Psoas muscle (tissue), 8 donors: ENCODE measurements at regions of chr3 and their contacts with region 1.

Region 1: GRCh38 chr3:132519914-132520313 is 77.2 kb upstream of the ACKR4 start:
- DNase-seq: no peak
- ATAC-seq: no peak
- H3K4me3 ChIP-seq: no peak overlapping the region
- H3K27ac ChIP-seq: no peak overlapping the region
- H3K4me1 ChIP-seq: no peaks in the 10 kb centered on the region
- H3K27me3 ChIP-seq: no peaks in the 10 kb centered on the region
- CTCF ChIP-seq: no peak

Region 2: DNA sequence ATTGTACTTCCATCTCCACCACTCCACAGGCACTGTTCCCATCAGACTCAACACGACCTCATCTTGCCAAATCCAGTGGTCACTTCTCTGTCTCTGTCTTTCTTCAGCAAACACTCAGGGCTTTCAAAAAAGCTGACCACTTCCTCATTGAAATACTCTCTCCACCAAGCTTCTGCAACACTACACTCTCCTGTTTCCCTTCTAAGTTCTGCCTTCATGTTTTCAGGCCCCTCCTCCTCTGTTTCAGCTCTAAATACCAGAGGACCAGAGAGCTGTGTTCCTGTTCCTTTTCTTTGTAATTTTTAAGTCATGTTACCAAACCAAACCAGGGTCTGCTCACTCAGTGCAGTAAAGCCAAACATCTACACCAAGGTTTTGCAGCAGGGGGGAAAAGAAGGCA is 236.5 kb before region 1 on chr3:
- intact Hi-C with region 1: no loop called
- DNase-seq: no peak
- ATAC-seq: peak in 1 of 4 donors; percentile 26
- H3K4me3 ChIP-seq: no peak overlapping the region
- H3K27ac ChIP-seq: no peak overlapping the region
- H3K4me1 ChIP-seq: no peaks in the 10 kb centered on the region
- H3K27me3 ChIP-seq: no peaks in the 10 kb centered on the region
- CTCF ChIP-seq: no peak

Region 3: DNA sequence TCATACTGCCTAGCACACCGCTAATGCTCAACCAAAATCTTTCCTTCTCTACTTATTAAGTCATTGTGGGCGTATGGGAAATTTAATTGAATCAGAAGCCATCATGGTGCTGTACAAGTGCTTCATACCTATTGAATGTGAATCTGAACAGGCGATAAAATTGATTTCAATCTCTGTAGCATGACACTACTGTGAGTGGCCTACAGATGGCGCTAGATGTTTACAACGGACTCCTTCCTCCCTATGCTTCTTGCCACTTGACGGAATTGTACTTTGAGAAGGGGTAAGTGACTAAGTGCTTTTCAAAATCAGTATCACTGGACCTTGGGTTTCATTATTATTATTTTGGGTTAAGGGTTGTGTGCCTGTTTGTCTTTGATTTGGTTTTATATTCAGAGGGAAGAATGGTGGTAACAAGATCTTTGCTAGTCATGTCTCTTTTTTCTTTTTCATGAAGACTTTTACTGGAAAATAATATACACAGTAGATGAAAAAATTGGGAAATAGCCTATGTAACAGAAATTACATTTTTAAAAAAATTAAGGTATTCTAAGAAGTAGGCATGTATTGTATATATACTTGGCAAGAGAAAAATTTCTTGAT is 167.3 kb before region 1 on chr3:
- intact Hi-C with region 1: loop called in 1 of 2 experiments (anchors 5 kb)
- DNase-seq: peak in 1 of 2 donors; percentile 21
- ATAC-seq: peak; percentile 81 to 94 (median 85)
- H3K4me3 ChIP-seq: no peak overlapping the region
- H3K27ac ChIP-seq: no peak overlapping the region
- H3K4me1 ChIP-seq: no peaks in the 10 kb centered on the region
- H3K27me3 ChIP-seq: no peaks in the 10 kb centered on the region
- CTCF ChIP-seq: peak; percentile 89

Region 4: GRCh38 chr3:132682201-132682600 is 162.3 kb after region 1 on chr3:
- intact Hi-C with region 1: loop called in 1 of 2 experiments (anchors 5 kb)
- DNase-seq: no peak
- ATAC-seq: no peak
- H3K4me3 ChIP-seq: no peak overlapping the region
- H3K27ac ChIP-seq: no peak overlapping the region
- H3K4me1 ChIP-seq: no peaks in the 10 kb centered on the region
- H3K27me3 ChIP-seq: no peaks in the 10 kb centered on the region
- CTCF ChIP-seq: no peak

Region 5: GRCh38 chr3:132695422-132695821 is 175.5 kb after region 1 on chr3:
- intact Hi-C with region 1: loop called in 1 of 2 experiments (anchors 10 kb)
- DNase-seq: no peak
- ATAC-seq: no peak
- H3K4me3 ChIP-seq: no peak overlapping the region
- H3K27ac ChIP-seq: no peak overlapping the region
- H3K4me1 ChIP-seq: no peaks in the 10 kb centered on the region
- H3K27me3 ChIP-seq: no peaks in the 10 kb centered on the region
- CTCF ChIP-seq: no peak